ENCODE measurements at regions of chr17 and their contacts with region 1.

Region 1: DNA sequence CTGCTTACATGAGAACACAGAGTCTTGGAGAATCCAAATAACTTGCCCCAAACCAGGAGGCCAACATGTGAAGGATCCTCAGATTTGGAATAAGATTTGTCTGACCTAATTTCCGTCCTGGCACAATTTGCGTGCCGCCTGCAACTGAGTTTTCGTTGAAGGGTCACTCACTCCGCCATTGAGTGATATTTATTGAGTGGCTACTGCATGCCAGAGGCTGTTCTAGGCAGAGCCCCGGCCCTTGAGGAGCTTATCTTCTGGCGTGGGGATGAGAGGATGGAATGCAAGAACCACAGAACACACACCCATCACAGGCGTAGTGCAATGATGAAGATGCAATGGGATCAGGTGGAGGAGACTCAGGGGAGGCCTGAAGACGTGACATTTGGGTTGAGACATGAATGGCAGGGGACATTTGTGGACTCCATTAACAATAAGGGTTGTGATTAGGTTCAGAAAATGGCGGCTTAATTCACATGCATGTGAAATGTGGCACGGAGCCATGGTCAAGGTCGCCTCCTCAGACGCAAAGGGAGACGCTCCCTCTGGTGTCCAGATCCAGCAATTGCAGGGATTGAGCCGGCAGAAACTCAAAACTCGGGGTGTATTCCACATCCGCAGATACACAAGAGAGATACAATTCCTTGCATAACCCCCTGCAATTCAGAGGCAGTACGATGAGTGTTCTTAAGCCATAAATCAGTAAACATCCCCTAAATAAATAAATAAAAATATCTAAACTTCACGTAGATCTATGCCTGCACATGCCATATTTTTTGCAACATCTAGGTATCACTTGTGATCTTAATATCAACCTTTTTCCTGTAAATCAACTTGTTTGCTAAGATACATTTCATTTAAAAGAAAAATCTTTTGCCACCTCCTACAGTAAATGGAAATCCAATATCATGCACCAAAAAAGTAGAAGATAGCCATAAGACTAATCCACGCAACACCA is 57.9 kb upstream of the CACNG4 start:
- DNase-seq: peak; percentile 81
- H3K4me3 Mint-ChIP-seq: no peak overlapping the region
- H3K27ac Mint-ChIP-seq: peak overlapping the region; percentile 12
- H3K4me1 Mint-ChIP-seq: peaks cover 41% of the 10 kb centered on the region
- H3K27me3 Mint-ChIP-seq: peaks cover 10% of the 10 kb centered on the region
- CTCF ChIP-seq: peak; percentile 78

Region 2: DNA sequence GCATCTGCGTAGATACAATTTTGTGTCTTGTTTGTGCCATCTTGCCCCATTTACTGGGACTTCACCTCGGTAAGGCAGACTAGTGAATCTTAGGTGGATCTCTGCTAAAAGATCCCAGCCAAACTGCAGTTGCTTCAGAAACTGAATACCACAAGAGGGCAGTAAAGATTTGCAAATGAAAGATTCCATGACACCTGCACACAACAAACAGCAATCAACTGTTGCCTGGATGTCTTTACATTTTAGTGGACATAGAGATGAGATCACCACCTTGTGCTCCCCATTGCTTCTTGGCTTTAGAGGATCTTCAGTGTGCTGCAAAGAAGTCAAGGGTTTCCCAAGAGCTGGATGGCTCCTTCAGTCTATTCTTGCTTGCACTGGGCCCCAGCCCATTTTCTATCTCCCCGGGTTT is 190.8 kb before region 1 on chr17:
- CTCF ChIA-PET with region 1: no interaction called
- intact Hi-C with region 1: loop called (anchors 1 kb)
- DNase-seq: peak; percentile 32
- H3K4me3 Mint-ChIP-seq: no peak overlapping the region
- H3K27ac Mint-ChIP-seq: no peak overlapping the region
- H3K4me1 Mint-ChIP-seq: peaks cover 36% of the 10 kb centered on the region
- H3K27me3 Mint-ChIP-seq: no peaks in the 10 kb centered on the region
- CTCF ChIP-seq: peak; percentile 21

Measured in Calu3 (cell line).